ENCODE measurements at regions of chr15 and their contacts with region 1.

Region 1: GRCh38 chr15:73633111-73633990 is at the start of gene NPTN:
- DNase-seq: peak; percentile 98
- H3K4me3 ChIP-seq: peak within 1 kb of the TSS; percentile 92 to 94
- H3K27ac ChIP-seq: peak within 1 kb of the TSS; percentile 90 to 96
- H3K4me1 ChIP-seq: peaks cover 5% of the 10 kb centered on the region
- H3K27me3 ChIP-seq: no peaks in the 10 kb centered on the region
- CTCF ChIP-seq: peak in 1 of 4 experiments; percentile 18
- POLR2A ChIP-seq: peak; percentile 84
- total RNA-seq, gene NPTN: 147 to 266 TPM

Region 2: GRCh38 chr15:72722071-72722696 is 911.2 kb before region 1 on chr15:
- intact Hi-C with region 1: no loop called
- DNase-seq: peak; percentile 67
- H3K4me3 ChIP-seq: no peak overlapping the region
- H3K27ac ChIP-seq: peak overlapping the region in 1 of 2 donors; percentile 17
- H3K4me1 ChIP-seq: no peaks in the 10 kb centered on the region
- H3K27me3 ChIP-seq: no peaks in the 10 kb centered on the region
- CTCF ChIP-seq: peak in 3 of 4 experiments; percentile 62 to 79 (median 62)
- POLR2A ChIP-seq: no peak

Region 3: DNA sequence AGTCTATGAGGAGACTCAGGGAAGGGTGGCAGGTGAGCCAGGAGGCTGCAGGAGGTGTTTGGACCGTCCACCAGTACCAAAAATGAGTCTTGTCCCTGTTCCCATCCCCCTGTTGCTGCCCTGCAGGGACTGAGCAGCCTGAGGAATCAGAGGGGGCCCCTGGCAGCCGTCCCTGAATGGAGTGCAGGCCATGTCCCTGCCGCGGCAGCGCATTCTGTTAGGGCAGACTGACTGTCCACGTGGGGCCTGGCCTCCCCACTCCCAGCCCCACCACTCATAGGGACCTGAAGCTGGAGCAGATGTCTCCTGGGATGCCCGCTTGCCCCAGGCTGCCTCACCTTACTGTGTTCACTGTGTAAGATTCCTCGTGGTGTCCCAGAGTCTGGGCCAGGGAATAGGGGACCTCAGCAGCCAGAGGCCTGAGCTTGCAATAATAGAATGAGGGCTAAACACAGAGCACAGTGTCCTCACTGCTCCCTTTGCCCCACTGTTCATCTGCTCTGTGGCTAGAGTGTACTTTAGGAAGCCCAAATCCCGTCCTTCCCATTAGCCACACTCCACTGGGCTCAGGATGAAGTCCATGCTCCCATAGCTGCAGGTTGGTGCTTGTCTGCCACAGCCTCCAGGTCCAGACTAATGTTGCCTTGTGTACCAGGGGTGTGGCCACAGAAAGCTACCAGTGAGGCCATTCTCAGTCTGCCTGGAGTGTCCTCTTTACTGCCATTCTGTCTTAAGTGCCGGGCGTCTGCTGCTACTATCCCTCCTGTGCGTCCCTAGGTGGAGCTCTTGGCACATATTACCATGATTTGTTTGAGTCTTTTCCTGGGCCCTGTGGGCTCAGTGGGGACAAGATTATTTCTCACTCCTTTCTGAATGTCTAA is 327.8 kb before region 1 on chr15:
- intact Hi-C with region 1: loop called (anchors 2 kb)
- DNase-seq: peak; percentile 21
- H3K4me3 ChIP-seq: no peak overlapping the region
- H3K27ac ChIP-seq: no peak overlapping the region
- H3K4me1 ChIP-seq: no peaks in the 10 kb centered on the region
- H3K27me3 ChIP-seq: no peaks in the 10 kb centered on the region
- CTCF ChIP-seq: peak in 2 of 4 experiments; percentile 30 to 39
- POLR2A ChIP-seq: no peak

Region 4: GRCh38 chr15:73560501-73561117 is 72.7 kb before region 1 on chr15:
- intact Hi-C with region 1: loop called (anchors 1 kb)
- DNase-seq: peak; percentile 35
- H3K4me3 ChIP-seq: no peak overlapping the region
- H3K27ac ChIP-seq: no peak overlapping the region
- H3K4me1 ChIP-seq: no peaks in the 10 kb centered on the region
- H3K27me3 ChIP-seq: no peaks in the 10 kb centered on the region
- CTCF ChIP-seq: peak in 3 of 4 experiments; percentile 33 to 60 (median 57)
- POLR2A ChIP-seq: no peak

Region 5: GRCh38 chr15:73571346-73571745 is 62.0 kb before region 1 on chr15:
- intact Hi-C with region 1: no loop called
- DNase-seq: no peak
- H3K4me3 ChIP-seq: no peak overlapping the region
- H3K27ac ChIP-seq: no peak overlapping the region
- H3K4me1 ChIP-seq: no peaks in the 10 kb centered on the region
- H3K27me3 ChIP-seq: no peaks in the 10 kb centered on the region
- CTCF ChIP-seq: no peak
- POLR2A ChIP-seq: no peak

Region 6: DNA sequence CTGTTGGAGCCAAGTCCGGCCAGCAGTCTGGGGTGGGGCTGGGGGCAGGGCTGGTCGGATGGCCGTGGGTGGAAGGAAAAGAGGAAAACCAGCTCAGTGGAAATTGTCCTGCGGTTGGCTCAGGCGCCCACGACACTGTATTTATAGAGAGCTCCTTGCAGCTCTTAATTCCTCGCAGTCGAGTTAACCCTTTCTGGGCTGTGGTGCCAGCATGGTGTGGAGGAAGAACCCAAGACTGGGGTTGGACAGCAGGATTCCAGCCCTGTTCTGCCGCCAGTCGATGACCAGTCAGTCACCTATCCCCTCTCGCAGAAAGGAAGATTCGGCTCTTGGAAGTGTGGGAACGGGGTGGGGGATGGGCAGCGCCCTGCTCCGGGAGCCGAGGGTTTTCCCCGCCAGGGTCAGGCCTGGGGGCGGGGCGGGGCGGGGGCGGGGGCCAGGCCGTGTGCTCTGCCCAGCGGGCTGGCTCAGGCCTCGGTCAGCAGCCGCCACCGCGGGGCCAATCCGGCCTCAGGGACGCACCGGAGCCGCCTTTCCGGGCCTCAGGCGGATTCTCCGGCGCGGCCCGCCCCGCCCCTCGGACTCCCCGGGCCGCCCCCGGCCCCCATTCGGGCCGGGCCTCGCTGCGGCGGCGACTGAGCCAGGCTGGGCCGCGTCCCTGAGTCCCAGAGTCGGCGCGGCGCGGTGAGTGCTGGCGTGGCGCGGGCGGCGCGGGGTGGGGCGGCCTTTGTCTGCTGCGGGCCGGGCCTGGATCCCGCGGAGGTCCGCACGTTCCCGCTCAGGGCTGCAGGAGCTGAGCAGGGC is 50.6 kb after region 1 on chr15 and contains the start of gene CD276:
- intact Hi-C with region 1: loop called (anchors 10 kb)
- DNase-seq: peak; percentile 61
- H3K4me3 ChIP-seq: peak within 1 kb of the TSS; percentile 87 to 88
- H3K27ac ChIP-seq: peak within 1 kb of the TSS; percentile 76 to 81
- H3K4me1 ChIP-seq: no peaks in the 10 kb centered on the region
- H3K27me3 ChIP-seq: no peaks in the 10 kb centered on the region
- CTCF ChIP-seq: peak in 2 of 4 experiments; percentile 3 to 14
- POLR2A ChIP-seq: no peak
- total RNA-seq, gene CD276: 75.0 to 91.3 TPM

Measured in prostate gland (tissue), 2 donors.